ENCODE measurements at regions of chr18 and their contacts with region 1.

Region 1: GRCh38 chr18:25780105-25780504 is 310.3 kb downstream of the SS18 start:
- DNase-seq: no peak
- ATAC-seq: no peak
- H3K4me3 ChIP-seq: no peak overlapping the region
- H3K27ac ChIP-seq: no peak overlapping the region
- H3K4me1 ChIP-seq: no peaks in the 10 kb centered on the region
- H3K27me3 ChIP-seq: no peaks in the 10 kb centered on the region
- CTCF ChIP-seq: no peak

Region 2: GRCh38 chr18:25726298-25726697 is 53.8 kb before region 1 on chr18:
- intact Hi-C with region 1: no loop called
- DNase-seq: no peak
- ATAC-seq: no peak
- H3K4me3 ChIP-seq: no peak overlapping the region
- H3K27ac ChIP-seq: no peak overlapping the region
- H3K4me1 ChIP-seq: no peaks in the 10 kb centered on the region
- H3K27me3 ChIP-seq: no peaks in the 10 kb centered on the region
- CTCF ChIP-seq: no peak

Region 3: DNA sequence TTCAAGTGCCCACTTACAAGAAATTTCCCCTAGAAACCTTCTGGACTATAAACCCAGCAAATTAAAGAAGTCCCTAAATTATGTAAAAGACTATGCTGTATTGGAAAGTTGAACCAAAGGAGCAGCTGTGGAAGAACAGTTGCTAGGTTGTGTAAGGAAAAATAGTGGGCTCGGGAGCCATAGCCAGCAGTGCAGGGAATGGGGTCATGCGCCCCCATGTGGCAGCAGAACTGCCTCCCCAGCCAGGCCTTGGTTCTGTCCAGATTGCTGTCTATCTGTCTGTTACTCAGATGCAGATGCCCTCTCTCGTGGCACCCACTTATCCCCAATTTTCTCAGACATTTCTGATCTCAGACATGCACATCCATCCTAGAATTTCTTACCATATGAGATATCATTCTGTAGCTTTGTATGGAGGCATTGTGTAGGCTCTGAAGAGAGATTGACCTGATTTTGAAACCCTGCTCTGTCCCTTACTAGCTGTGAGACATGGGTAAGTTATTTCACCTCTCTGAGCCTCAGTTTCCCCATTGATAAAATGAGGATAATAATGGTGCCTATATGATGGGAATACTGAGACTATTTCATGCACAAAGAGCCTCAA is 52.0 kb after region 1 on chr18:
- intact Hi-C with region 1: loop called in 1 of 2 experiments (anchors 5 kb)
- DNase-seq: peak; percentile 61 to 71
- ATAC-seq: peak; percentile 86 to 93 (median 87)
- H3K4me3 ChIP-seq: no peak overlapping the region
- H3K27ac ChIP-seq: no peak overlapping the region
- H3K4me1 ChIP-seq: no peaks in the 10 kb centered on the region
- H3K27me3 ChIP-seq: no peaks in the 10 kb centered on the region
- CTCF ChIP-seq: peak; percentile 75

Region 4: GRCh38 chr18:26127786-26128185 is 347.7 kb after region 1 on chr18:
- intact Hi-C with region 1: no loop called
- DNase-seq: no peak
- ATAC-seq: no peak
- H3K4me3 ChIP-seq: no peak overlapping the region
- H3K27ac ChIP-seq: no peak overlapping the region
- H3K4me1 ChIP-seq: no peaks in the 10 kb centered on the region
- H3K27me3 ChIP-seq: no peaks in the 10 kb centered on the region
- CTCF ChIP-seq: no peak

Measured in psoas muscle (tissue), 8 donors.